Activated CD4-positive, alpha-beta memory T cell treated with anti-CD3 and anti-CD28 coated beads for 36 hours (primary cell): ENCODE measurements at regions of chr18 and their contacts with region 1.

Region 1: DNA sequence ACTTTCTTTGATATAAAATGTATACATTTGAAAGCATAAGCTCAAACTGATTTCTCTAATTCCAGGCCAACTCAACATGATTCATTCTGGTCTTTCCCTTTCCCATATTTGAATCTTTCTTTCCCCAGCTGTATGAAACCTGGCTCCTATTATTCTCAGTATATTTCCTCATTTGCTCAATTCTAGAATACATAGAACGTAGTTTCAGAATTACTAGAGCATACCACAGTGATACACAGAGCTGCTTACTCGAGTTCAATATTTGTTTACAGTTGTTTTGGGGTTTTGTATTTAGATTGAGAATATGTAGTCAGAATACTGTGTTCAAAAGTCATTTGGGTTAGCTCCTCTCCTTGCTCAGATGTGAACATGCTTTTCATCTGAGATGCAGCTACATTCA is 43.0 kb downstream of the TNFRSF11A start:
- DNase-seq: no peak
- H3K4me3 Mint-ChIP-seq: no peak overlapping the region
- H3K27ac Mint-ChIP-seq: no peak overlapping the region
- H3K4me1 Mint-ChIP-seq: peaks cover 15% of the 10 kb centered on the region
- H3K27me3 Mint-ChIP-seq: peaks cover 3% of the 10 kb centered on the region

Region 2: DNA sequence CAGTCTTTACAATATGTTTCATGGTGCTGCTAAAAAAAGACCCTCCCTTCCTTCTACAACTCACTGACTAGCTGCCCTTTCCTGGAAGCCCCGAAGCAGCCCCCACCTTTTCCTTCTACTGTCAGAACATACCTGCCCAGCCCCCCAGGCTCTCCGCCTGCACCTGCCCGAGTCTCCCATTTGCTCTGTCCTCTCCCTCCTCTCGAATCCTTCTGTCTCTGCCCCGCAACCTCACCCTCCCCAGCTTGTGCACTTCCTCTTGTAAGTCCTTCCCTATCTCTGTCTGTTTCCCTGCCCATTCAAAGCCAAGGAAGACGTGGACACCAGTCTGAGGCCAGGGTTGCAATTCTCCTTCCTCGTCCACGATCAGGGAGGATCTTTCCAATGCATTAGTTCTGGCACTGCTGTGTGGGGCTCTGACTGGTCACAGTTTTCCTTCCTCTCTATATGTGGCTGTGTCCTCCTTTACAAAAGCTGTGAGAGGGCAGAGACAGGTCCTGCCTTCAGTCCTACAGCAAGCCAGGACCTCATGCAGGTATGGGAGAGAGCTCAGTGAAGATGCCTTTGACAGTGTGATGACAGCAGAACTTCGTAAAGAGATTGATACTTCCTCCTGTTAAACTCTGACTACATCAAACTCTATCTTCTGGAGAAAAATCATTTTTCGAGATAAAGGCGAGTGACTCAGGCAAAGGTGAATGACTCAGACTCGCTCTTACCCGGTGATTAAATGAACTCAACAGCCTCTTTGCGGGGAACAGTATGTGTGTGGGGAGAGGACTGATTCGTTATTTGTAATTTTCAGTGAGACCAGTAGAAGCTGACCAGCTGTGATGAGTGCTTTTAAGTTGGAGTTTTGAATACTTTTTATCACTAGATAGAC is 28.8 kb before region 1 on chr18:
- CTCF ChIA-PET with region 1: interaction called, 3 read pairs
- POLR2A ChIA-PET with region 1: interaction called, 3 read pairs
- intact Hi-C with region 1: loop called (anchors 1 kb)
- DNase-seq: peak; percentile 53
- H3K4me3 Mint-ChIP-seq: peak overlapping the region; percentile 31
- H3K27ac Mint-ChIP-seq: peak overlapping the region; percentile 73
- H3K4me1 Mint-ChIP-seq: peaks cover 29% of the 10 kb centered on the region
- H3K27me3 Mint-ChIP-seq: peaks cover 43% of the 10 kb centered on the region

Region 3: GRCh38 chr18:62396381-62396780 is 28.3 kb after region 1 on chr18:
- CTCF ChIA-PET with region 1: no interaction called
- POLR2A ChIA-PET with region 1: no interaction called
- intact Hi-C with region 1: loop called (anchors 1 kb)
- DNase-seq: peak; percentile 58
- H3K4me3 Mint-ChIP-seq: no peak overlapping the region
- H3K27ac Mint-ChIP-seq: peak overlapping the region; percentile 19
- H3K4me1 Mint-ChIP-seq: peaks cover 27% of the 10 kb centered on the region
- H3K27me3 Mint-ChIP-seq: peaks cover 15% of the 10 kb centered on the region